Activated B cell treated with CpG ODN at 0.5 μM for 24 hours (primary cell): ENCODE measurements at regions of chr1 and their contacts with region 1.

Region 1: GRCh38 chr1:152047730-152048402 is 11.1 kb upstream of the S100A11 start:
- DNase-seq: peak; percentile 72
- ATAC-seq: peak; percentile 94
- H3K4me3 Mint-ChIP-seq: peak overlapping the region; percentile 73
- H3K27ac Mint-ChIP-seq: peak overlapping the region; percentile 98
- H3K4me1 Mint-ChIP-seq: peaks cover 17% of the 10 kb centered on the region
- H3K27me3 Mint-ChIP-seq: peaks cover 2% of the 10 kb centered on the region
- CTCF ChIP-seq: no peak

Region 2: DNA sequence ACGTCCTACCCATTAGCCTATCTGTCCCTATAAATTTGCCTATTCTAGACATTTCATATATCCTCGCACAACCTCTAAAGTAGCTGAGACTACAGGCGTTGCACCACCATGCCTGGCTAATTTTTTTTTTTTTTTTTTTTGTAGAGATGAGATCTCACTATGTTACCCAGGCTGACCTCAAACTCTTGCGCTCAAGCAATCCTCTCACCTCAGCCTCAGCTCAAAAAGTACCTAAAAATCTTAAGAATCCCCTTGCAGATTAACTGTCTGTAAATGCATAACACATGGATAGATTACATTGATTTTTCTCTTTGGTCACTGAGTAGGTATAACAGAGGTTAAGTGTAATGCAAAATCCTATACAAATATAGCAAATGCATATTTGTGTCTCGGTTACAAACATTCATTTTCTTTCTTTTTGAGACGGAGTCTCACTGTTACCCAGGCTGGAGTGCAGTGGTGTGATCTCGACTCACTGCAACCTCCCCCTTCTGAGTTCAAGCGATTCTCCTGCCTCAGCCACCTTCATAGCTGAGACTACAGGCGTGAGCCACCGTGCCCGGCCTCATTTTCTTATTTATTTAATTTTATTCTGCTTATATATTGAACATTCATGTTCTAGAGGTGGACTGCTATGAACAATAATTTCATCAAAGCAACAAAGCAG is 1329.5 kb before region 1 on chr1:
- CTCF ChIA-PET with region 1: no interaction called
- POLR2A ChIA-PET with region 1: no interaction called
- intact Hi-C with region 1: no loop called
- DNase-seq: no peak
- ATAC-seq: no peak
- H3K4me3 Mint-ChIP-seq: no peak overlapping the region
- H3K27ac Mint-ChIP-seq: no peak overlapping the region
- H3K4me1 Mint-ChIP-seq: no peaks in the 10 kb centered on the region
- H3K27me3 Mint-ChIP-seq: no peaks in the 10 kb centered on the region
- CTCF ChIP-seq: no peak

Region 3: DNA sequence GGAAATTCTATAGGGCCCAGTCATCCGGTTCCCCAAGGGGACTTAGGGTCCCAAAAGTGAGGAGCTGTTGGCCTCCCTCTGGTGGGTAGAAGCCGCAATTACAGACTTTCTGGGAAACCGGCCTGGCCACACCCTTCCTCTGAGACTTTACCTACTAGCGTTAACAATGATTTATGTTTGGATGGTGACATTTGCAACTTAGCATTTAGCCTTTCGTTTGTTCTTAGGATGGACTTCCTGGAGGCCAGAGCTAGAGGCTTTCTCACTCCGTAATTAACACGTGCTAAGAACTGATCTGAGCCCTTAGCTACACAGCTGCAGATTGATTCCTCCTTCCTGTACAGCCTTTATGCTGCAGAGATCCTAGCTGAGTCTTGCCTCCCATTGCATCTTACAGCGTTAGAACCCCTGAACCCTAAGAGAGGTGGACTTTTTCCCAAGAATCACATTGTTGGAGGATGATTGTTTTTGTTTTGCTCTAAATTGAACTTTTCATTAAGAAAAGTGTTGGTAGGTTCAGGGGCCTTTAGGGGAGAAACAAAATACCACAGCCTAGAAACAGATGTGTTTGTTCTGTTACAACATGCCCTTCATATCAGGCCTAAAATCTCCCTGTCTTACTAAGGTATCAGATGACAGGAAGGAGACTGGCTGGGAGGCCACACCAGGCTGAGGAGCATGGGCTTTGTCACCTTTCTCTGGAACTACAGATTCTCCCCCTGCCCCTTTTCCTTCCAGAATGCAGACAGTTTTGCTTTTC is 13.0 kb before region 1 on chr1:
- CTCF ChIA-PET with region 1: interaction called, 9 read pairs
- POLR2A ChIA-PET with region 1: interaction called, 47 read pairs
- intact Hi-C with region 1: loop called (anchors 1 kb)
- DNase-seq: peak; percentile 25
- ATAC-seq: peak; percentile 61
- H3K4me3 Mint-ChIP-seq: peak overlapping the region; percentile 92
- H3K27ac Mint-ChIP-seq: peak overlapping the region; percentile 88
- H3K4me1 Mint-ChIP-seq: peaks cover 38% of the 10 kb centered on the region
- H3K27me3 Mint-ChIP-seq: no peaks in the 10 kb centered on the region
- CTCF ChIP-seq: peak; percentile 72

Region 4: GRCh38 chr1:152347116-152347728 is 299.4 kb after region 1 on chr1:
- CTCF ChIA-PET with region 1: no interaction called
- POLR2A ChIA-PET with region 1: no interaction called
- intact Hi-C with region 1: loop called (anchors 2 kb)
- DNase-seq: no peak
- ATAC-seq: peak; percentile 47
- H3K4me3 Mint-ChIP-seq: no peak overlapping the region
- H3K27ac Mint-ChIP-seq: no peak overlapping the region
- H3K4me1 Mint-ChIP-seq: no peaks in the 10 kb centered on the region
- H3K27me3 Mint-ChIP-seq: no peaks in the 10 kb centered on the region
- CTCF ChIP-seq: peak; percentile 93

Region 5: GRCh38 chr1:152440635-152441471 is 393.0 kb after region 1 on chr1:
- CTCF ChIA-PET with region 1: interaction called, 6 read pairs
- POLR2A ChIA-PET with region 1: no interaction called
- intact Hi-C with region 1: loop called (anchors 1 kb)
- DNase-seq: peak; percentile 37
- ATAC-seq: peak; percentile 99
- H3K4me3 Mint-ChIP-seq: no peak overlapping the region
- H3K27ac Mint-ChIP-seq: no peak overlapping the region
- H3K4me1 Mint-ChIP-seq: no peaks in the 10 kb centered on the region
- H3K27me3 Mint-ChIP-seq: peaks cover 26% of the 10 kb centered on the region
- CTCF ChIP-seq: no peak